ENCODE measurements at regions of chr5 and their contacts with region 1.

Region 1: GRCh38 chr5:156036640-156037039 is 290.3 kb upstream of the SGCD start:
- DNase-seq: no peak

Region 2: DNA sequence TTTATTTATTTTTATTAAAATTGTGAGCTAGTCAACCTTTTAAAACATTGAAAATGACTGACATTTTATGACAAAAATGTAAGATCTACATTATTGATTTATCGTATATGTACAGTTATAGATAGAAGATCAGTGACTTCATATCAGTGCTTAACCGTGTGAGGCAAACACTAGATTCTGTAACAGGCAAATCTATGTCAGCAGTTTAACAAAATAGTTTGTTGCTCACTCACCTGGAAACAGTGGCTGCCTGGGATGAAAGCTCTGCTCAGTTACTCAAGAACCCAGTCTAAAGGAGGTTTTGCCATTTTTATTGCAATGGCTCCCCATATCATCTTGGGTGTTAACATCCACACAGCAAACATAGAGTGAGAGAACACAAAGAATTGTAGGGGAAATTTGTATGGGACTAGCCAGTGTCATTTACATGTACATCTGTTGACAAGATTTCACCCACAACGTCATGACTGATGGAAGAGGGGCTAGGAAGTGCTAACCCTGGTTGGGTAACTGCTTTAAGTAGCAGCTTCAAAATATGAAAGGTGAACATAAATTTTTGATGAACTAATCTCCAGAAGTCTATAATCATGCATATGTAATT is 339.4 kb after region 1 on chr5:
- in situ Hi-C with region 1: loop called (anchors 10 kb)
- DNase-seq: no peak

Measured in Caki2 (cell line).